A549 (cell line): ENCODE measurements at regions of chr6 and their contacts with region 1.

Region 1: DNA sequence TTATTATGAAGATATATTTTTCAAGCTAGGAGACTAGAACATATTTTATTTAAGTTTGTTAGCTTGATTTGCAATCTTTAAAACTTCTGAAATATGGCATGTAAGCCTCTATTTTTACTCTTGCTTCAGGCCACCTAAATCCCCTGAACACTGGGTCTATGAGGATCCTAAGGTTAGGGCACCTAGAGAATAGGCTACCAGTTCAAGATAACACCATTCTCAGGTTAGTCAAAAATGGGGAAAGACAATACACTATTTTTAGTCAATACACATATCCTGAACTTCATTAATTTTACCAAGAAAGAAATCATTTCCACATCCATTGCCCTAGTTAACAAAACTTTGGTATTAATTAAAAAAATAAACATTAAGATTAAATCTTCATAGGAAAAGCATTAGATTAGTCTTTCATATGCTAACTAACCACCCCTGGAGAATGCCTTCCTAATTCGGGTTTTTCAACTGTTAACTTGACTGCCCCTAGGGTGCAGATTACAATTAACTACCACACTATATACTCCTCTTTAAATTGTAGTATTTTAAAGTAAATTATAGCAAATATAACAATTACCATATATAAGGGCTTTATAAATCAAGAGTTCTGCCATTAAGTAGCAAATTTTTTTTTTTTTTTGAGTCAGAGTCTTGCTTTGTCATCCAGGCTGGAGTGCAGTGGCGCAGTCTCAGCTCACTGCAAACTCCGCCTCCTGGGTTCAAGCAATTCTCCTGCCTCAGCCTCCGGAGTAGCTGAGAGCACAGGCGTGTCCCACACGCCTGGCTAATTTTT is 6.7 kb upstream of the HSF2 start:
- DNase-seq: no peak
- ATAC-seq: no peak
- H3K4me3 ChIP-seq: no peak overlapping the region
- H3K27ac ChIP-seq: no peak overlapping the region
- H3K4me1 ChIP-seq: no peaks in the 10 kb centered on the region
- CTCF ChIP-seq: no peak
- EP300 ChIP-seq: no peak
- POLR2A ChIP-seq: no peak
- RAD21 ChIP-seq: no peak

Region 2: DNA sequence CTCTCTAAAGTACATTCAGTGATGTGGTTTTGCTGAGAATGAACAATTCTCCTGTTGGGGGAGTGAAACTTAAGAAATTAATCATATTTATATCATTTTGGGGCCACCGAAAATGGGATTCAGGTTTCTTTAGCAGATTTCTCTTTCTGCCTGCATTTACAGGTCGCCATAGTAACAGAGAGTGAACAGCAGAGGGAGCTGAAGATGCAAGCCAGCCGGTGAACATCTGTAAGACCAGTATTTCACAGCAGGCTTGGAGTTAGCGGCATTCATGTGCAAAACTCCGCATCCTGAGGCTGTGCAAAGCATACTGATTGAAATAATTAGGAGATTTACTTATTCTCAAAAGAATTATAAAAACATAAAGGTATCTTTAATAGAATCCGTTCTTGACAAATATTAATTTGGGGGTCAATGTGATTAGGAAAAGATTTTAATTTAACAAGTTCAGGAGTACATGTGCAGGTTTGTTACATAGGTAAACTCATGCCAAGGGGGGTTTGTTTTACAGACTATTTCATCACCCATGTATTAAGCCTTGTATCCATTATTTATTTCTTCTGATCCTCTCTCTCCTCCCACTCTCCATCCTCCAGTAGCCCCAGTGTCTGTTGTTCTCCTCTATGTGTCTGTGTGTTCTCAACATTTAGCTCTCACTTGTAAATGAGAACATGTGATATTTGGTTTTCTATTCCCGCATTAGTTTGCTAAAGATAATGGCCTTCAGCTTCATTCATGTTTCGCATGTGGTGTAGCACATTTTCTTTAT is 11.1 kb before region 1 on chr6:
- CTCF ChIA-PET with region 1: interaction called, 10 read pairs
- POLR2A ChIA-PET with region 1: no interaction called
- DNase-seq: peak; percentile 25 to 67
- ATAC-seq: peak; percentile 91
- H3K4me3 ChIP-seq: no peak overlapping the region
- H3K27ac ChIP-seq: no peak overlapping the region
- H3K4me1 ChIP-seq: no peaks in the 10 kb centered on the region
- CTCF ChIP-seq: peak; percentile 61
- EP300 ChIP-seq: no peak
- POLR2A ChIP-seq: no peak
- RAD21 ChIP-seq: peak; percentile 47 to 53

Region 3: DNA sequence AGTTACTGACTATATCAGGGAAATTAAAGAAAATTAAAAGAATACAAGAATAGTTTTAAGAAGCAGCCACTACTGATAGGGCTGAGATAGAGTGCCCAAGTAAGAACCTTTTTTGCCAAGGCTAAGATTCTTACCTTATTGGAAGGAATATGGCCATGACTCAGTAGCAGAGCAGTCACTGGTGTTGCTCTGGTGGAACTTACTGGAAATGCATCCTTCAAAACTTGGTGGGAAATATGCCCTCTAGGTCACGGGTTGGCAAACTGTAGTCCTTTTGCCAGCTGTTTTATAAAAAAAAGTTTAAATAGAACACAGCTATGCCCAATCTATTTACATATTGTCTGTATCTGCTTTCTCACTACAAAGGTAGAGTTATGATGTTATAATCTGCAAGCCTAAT is 12.7 kb after region 1 on chr6:
- CTCF ChIA-PET with region 1: no interaction called
- POLR2A ChIA-PET with region 1: no interaction called
- DNase-seq: peak in 1 of 2 experiments; percentile 13
- ATAC-seq: peak; percentile 73 to 77; a peak in 4 of 6 replicates
- H3K4me3 ChIP-seq: no peak overlapping the region
- H3K27ac ChIP-seq: no peak overlapping the region
- H3K4me1 ChIP-seq: peaks cover 11% of the 10 kb centered on the region; the same call in 2 of the 3 replicates
- CTCF ChIP-seq: no peak
- EP300 ChIP-seq: no peak
- POLR2A ChIP-seq: no peak
- RAD21 ChIP-seq: no peak